ENCODE measurements at regions of chr14 and their contacts with region 1.

Region 1: DNA sequence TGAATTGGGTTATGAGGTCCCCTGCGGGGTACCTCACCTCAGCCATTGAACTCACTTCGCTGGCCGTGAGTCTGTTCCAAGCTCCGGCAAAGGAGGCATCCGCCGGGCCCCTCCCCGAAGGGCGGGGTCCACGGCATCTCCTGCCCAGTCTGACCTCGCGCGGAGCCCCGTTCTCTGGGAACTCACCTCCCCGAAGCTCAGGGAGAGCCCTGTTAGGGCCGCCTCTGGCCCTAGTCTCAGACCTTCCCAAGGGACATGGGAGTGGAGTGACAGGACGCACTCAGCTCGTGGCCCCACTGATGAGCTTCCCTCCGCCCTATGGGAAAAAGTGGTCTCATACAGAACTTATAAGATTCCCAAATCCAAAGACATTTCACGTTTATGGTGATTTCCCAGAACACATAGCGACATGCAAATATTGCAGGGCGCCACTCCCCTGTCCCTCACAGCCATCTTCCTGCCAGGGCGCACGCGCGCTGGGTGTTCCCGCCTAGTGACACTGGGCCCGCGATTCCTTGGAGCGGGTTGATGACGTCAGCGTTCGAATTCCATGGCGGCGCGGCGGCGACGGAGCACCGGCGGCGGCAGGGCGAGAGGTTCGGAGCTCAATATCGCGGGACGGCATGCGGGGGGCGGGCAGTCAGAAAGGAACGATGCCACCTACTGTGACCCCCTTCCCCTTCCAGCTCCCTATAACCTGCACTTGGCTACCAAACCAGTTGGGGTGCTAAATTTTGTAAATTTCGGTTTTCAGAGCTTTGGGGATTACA is at the start of gene PARP2:
- DNase-seq: peak; percentile 82 to 100 (median 91)
- ATAC-seq: peak; percentile 82 to 85
- H3K4me3 Mint-ChIP-seq: peak within 1 kb of the TSS; percentile 88 to 100 (median 98)
- H3K27ac Mint-ChIP-seq: peak within 1 kb of the TSS; percentile 96 to 99 (median 98)
- H3K4me1 Mint-ChIP-seq: peaks cover 11 to 25% (median 17%) of the 10 kb centered on the region in 4 donors
- H3K27me3 Mint-ChIP-seq: peaks cover 0 to 4% (median 0%) of the 10 kb centered on the region in 5 donors
- polyA plus RNA-seq, gene PARP2: 8.8 to 13.6 (median 9.6) TPM

Region 2: DNA sequence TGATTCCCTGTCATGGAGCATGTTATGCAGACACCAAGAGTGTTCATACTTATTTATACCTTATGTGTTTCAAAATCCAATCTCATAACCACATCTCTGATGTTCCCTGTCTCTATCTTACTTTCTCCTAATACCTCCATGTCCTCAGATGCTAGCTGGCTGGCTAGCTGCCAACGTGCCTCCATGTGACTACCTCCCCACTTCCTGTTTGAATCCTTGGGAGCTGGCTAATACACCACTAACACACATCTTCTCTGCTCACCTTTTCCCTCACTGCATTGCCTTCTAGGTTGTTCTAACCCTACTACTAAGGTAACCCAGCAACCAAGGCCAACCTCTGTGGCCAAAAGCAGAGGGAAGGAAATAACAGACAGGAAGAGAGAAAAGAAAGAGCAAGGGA is 64.9 kb before region 1 on chr14:
- POLR2A ChIA-PET with region 1: no interaction called
- DNase-seq: peak in 1 of 10 donors; percentile 39
- ATAC-seq: peak in 1 of 2 donors; percentile 66
- H3K4me3 Mint-ChIP-seq: peak overlapping the region in 3 of 10 donors; percentile 23 to 64 (median 33)
- H3K27ac Mint-ChIP-seq: peak overlapping the region in 8 of 10 donors; percentile 13 to 90 (median 58)
- H3K4me1 Mint-ChIP-seq: peaks cover 19 to 35% (median 29%) of the 10 kb centered on the region in 4 donors
- H3K27me3 Mint-ChIP-seq: no peaks in the 10 kb centered on the region

Region 3: GRCh38 chr14:20305265-20306078 is 37.8 kb before region 1 on chr14 and contains the start of gene TTC5:
- POLR2A ChIA-PET with region 1: no interaction called
- DNase-seq: peak; percentile 79 to 97 (median 90)
- ATAC-seq: peak; percentile 98
- H3K4me3 Mint-ChIP-seq: peak within 1 kb of the TSS; percentile 83 to 97 (median 92)
- H3K27ac Mint-ChIP-seq: peak within 1 kb of the TSS; percentile 87 to 98 (median 90)
- H3K4me1 Mint-ChIP-seq: peaks cover 19 to 41% (median 35%) of the 10 kb centered on the region in 4 donors
- H3K27me3 Mint-ChIP-seq: no peaks in the 10 kb centered on the region
- polyA plus RNA-seq, gene TTC5: 16.1 to 22.3 (median 18.7) TPM

Region 4: GRCh38 chr14:20332788-20333493 is 10.3 kb before region 1 on chr14 and contains the start of gene CCNB1IP1:
- POLR2A ChIA-PET with region 1: interaction called, 23 read pairs
- DNase-seq: peak in 9 of 10 donors; percentile 34 to 78 (median 64)
- ATAC-seq: peak; percentile 97 to 98
- H3K4me3 Mint-ChIP-seq: peak within 1 kb of the TSS; percentile 88 to 100 (median 97)
- H3K27ac Mint-ChIP-seq: peak within 1 kb of the TSS; percentile 87 to 96 (median 93)
- H3K4me1 Mint-ChIP-seq: peaks cover 3 to 34% (median 33%) of the 10 kb centered on the region in 4 donors
- H3K27me3 Mint-ChIP-seq: no peaks in the 10 kb centered on the region
- polyA plus RNA-seq, gene CCNB1IP1: 15.7 to 21.6 (median 18.5) TPM

Region 5: DNA sequence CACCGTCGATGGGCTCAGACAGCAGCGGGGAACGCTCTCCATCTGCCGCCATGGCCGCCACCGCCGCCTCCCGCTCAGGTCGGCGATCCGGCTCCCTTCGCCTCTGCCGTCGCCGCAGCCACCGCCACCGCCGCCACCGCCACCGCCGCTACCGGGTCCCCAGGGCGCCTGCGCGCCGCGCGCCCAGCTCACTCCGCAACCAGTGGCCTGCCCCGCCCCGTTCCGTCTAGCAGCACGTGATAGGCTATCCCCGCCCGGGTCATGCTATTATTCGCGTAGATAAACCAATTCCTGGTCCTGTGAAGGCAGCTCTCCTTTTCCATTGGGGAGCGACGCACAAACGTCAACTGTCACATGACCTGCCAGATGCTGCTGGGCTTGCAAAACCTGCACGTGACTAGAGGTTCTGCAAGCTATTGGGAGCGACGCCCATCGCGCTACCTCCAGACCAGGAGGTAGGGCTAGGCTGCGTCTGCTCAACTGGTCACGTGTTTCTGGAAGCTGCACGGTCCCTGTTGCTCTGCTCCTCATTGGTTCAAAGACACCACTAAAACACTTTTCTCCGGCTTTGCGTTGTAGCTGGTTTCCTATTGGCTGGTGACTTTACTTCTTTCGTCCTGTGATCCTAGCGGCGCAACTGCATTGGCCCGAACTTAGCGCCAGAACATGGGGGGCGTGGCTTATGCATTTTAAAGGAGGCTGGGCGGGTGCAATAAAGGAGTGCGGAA is 118.2 kb after region 1 on chr14 and contains the start of gene PIP4P1:
- POLR2A ChIA-PET with region 1: interaction called, 38 read pairs
- DNase-seq: peak; percentile 96 to 100 (median 98)
- ATAC-seq: peak; percentile 89
- H3K4me3 Mint-ChIP-seq: peak within 1 kb of the TSS; percentile 84 to 96 (median 92)
- H3K27ac Mint-ChIP-seq: peak within 1 kb of the TSS; percentile 86 to 99 (median 94)
- H3K4me1 Mint-ChIP-seq: peaks cover 24 to 43% (median 28%) of the 10 kb centered on the region in 4 donors
- H3K27me3 Mint-ChIP-seq: no peaks in the 10 kb centered on the region
- polyA plus RNA-seq, gene PIP4P1: 21.0 to 31.1 (median 21.3) TPM

Region 6: GRCh38 chr14:20613094-20614037 is 270.1 kb after region 1 on chr14:
- POLR2A ChIA-PET with region 1: interaction called, 23 read pairs
- DNase-seq: peak; percentile 56 to 93 (median 85)
- ATAC-seq: peak; percentile 77 to 81
- H3K4me3 Mint-ChIP-seq: no peak overlapping the region
- H3K27ac Mint-ChIP-seq: no peak overlapping the region
- H3K4me1 Mint-ChIP-seq: peaks cover 0 to 13% (median 2%) of the 10 kb centered on the region in 4 donors
- H3K27me3 Mint-ChIP-seq: no peaks in the 10 kb centered on the region